HEK293 (cell line): ENCODE measurements at regions of chr10 and their contacts with region 1.

Region 1: GRCh38 chr10:116490028-116490662 is 55.6 kb upstream of the PNLIP start:
- H3K4me3 ChIP-seq: no peak overlapping the region
- H3K27ac ChIP-seq: no peak overlapping the region
- H3K4me1 ChIP-seq: no peaks in the 10 kb centered on the region
- CTCF ChIP-seq: no peak

Region 2: DNA sequence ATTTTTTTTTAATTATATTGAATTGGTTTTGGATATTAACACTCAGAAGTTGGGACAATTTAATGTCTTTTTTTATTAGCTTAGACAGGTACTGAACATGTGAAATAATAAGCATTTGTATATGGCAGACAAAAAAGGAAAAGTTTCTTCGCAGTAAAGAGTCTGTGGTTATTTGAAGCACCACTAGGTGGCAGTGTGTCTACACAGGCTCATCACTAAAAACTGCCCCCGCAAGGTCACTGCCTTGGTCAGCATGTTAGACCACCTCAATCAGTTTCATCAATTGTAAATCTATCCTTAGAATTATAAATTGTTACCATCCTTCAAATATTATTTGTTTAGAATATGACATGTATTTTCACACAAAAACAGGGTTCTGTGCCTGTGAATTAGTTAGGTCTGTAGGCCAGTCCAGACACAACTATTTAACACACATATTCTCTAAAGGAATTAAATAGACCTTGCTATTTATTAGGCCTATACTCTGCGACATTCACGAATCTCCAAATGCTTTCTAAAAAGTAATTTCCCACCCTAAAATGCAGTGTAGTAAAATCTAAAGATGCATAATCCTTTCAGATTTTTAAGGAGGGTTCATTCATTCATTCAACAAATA is 45.5 kb before region 1 on chr10:
- CTCF ChIA-PET with region 1: interaction called, 19 read pairs
- POLR2A ChIA-PET with region 1: no interaction called
- H3K4me3 ChIP-seq: no peak overlapping the region
- H3K27ac ChIP-seq: no peak overlapping the region
- H3K4me1 ChIP-seq: no peaks in the 10 kb centered on the region
- CTCF ChIP-seq: peak; percentile 57; the same call in 1 of the 2 replicates

Region 3: GRCh38 chr10:116465546-116465945 is 24.6 kb before region 1 on chr10:
- CTCF ChIA-PET with region 1: interaction called, 12 read pairs
- POLR2A ChIA-PET with region 1: no interaction called
- H3K4me3 ChIP-seq: no peak overlapping the region
- H3K27ac ChIP-seq: no peak overlapping the region
- H3K4me1 ChIP-seq: no peaks in the 10 kb centered on the region
- CTCF ChIP-seq: no peak

Region 4: DNA sequence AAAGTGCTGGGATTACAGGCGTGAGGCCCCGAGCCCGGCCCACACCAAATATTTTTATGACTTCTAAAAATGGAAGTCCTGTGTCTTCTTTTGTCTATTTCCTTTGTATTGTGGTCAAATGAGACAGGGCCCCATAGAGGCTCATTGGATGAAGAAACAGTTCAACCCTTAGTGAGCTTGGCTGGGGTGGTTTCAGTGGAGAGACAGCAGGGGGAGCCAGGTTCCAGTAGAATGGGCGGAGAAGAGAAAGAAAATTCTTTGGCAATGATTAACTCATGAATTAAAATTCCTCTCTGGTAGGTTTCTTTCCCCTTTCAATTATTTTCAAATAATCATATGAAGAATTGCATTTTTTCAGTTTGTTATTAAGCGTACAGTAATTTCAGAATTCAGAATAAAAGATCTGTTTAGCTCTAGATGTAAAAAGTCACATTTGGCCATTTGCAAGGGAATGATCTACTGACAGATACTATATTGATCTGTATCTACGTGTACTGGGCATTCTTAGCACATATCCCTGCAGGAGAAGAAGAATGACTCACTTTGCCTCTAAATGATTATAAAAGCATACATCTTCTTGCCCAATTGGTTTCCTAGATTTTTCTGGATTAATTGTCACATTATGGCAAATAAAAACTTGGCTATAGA is 19.3 kb before region 1 on chr10:
- CTCF ChIA-PET with region 1: interaction called, 12 read pairs
- POLR2A ChIA-PET with region 1: no interaction called
- H3K4me3 ChIP-seq: no peak overlapping the region
- H3K27ac ChIP-seq: no peak overlapping the region
- H3K4me1 ChIP-seq: no peaks in the 10 kb centered on the region
- CTCF ChIP-seq: no peak